Activated B cell treated with CpG ODN at 0.5 μM for 24 hours (primary cell): ENCODE measurements at regions of chr10 and their contacts with region 1.

Region 1: DNA sequence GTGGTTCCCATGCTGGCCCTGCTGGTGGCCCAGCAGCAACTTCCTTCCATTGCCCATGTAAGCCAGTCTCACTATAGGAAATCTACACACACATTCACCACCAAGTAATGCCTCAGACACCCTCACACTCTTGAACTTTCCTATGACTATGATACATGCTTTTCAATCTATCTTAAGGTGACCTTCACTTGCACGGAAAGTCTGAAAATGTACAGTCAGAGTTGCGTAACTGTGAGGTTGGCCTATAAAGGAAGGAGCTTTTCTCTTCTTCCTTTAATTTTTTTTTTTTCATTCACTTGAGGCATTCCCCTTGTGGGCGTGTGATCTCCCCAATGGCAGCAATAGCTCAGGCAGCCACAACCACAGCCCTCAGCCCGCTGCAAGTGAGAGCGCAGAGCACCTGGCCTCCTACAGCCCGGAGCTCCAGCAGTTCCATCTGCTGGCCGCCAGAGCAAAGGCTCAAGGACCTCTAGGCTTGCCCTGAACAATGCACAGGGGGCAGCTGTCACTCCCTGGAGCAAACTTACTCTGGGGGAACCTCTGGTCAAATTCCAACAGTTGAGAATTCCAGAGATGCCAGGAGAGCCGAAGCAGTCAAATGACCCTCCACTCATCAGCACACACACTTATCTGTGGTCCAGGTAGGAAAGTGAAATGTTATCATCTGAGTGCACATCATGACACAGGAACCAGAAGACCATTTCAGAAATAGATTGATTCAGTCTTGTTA is 123.1 kb upstream of the ADO start:
- DNase-seq: peak; percentile 58
- ATAC-seq: peak; percentile 96
- H3K4me3 Mint-ChIP-seq: peak overlapping the region; percentile 46
- H3K27ac Mint-ChIP-seq: peak overlapping the region; percentile 55
- H3K4me1 Mint-ChIP-seq: peaks cover 22% of the 10 kb centered on the region
- H3K27me3 Mint-ChIP-seq: no peaks in the 10 kb centered on the region
- CTCF ChIP-seq: no peak

Region 2: GRCh38 chr10:62492012-62492869 is 189.1 kb before region 1 on chr10:
- CTCF ChIA-PET with region 1: no interaction called
- POLR2A ChIA-PET with region 1: no interaction called
- intact Hi-C with region 1: loop called (anchors 1 kb)
- DNase-seq: no peak
- ATAC-seq: peak; percentile 49
- H3K4me3 Mint-ChIP-seq: no peak overlapping the region
- H3K27ac Mint-ChIP-seq: no peak overlapping the region
- H3K4me1 Mint-ChIP-seq: peaks cover 27% of the 10 kb centered on the region
- H3K27me3 Mint-ChIP-seq: peaks cover 4% of the 10 kb centered on the region
- CTCF ChIP-seq: no peak

Region 3: DNA sequence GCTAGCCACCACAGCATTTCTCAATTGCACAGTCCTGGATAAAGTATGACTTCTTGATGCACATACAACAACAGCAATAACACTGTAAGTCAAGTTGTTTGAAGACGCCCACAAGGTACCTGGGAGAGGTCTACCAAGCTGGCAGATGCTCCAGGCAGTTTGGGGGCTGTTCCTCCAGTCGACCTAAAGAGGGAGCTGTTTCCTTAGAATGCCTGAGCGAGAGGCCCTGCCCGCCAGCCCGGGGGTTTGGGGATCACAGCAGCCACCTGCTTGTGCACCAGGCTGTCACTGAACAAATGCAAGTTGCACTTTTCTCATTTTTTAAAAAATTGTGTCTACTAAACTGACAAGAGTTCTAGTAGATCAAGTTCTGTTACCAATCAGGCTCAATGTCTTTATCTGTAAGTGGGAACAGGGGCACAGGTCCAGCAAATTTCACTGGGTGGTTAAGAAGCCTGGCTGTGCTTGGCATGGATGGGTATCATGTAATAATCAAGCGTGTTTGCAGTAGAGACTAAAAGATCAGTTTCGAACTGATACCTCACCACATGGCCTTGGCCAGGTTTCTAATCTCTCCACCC is 70.6 kb before region 1 on chr10:
- CTCF ChIA-PET with region 1: interaction called, 23 read pairs
- POLR2A ChIA-PET with region 1: interaction called, 5 read pairs
- intact Hi-C with region 1: loop called (anchors 1 kb)
- DNase-seq: peak; percentile 37
- ATAC-seq: peak; percentile 95
- H3K4me3 Mint-ChIP-seq: no peak overlapping the region
- H3K27ac Mint-ChIP-seq: peak overlapping the region; percentile 30
- H3K4me1 Mint-ChIP-seq: peaks cover 15% of the 10 kb centered on the region
- H3K27me3 Mint-ChIP-seq: no peaks in the 10 kb centered on the region
- CTCF ChIP-seq: peak; percentile 38

Region 4: DNA sequence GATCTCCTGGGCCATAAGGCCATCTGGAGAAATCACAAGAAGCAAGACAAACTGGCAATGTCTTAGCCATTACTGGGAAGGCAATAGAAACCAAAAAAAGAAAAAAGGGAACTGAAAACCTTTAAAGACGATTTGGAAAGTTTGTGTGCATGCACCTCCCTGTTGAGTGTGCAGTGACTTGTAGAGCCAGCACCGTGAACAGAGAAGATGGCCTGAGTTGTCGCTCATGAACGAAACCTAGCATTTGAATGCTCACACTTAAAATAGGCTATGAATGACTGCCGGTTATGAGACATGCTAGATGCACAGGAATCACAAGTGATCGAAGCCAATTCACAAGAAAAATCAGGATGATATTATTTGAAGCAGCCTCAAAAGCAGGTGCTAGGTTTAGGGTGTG is 28.1 kb before region 1 on chr10:
- CTCF ChIA-PET with region 1: interaction called, 3 read pairs
- POLR2A ChIA-PET with region 1: interaction called, 7 read pairs
- intact Hi-C with region 1: loop called (anchors 1 kb)
- DNase-seq: no peak
- ATAC-seq: peak; percentile 92
- H3K4me3 Mint-ChIP-seq: peak overlapping the region; percentile 55
- H3K27ac Mint-ChIP-seq: peak overlapping the region; percentile 87
- H3K4me1 Mint-ChIP-seq: peaks cover 66% of the 10 kb centered on the region
- H3K27me3 Mint-ChIP-seq: peaks cover 1% of the 10 kb centered on the region
- CTCF ChIP-seq: no peak

Region 5: DNA sequence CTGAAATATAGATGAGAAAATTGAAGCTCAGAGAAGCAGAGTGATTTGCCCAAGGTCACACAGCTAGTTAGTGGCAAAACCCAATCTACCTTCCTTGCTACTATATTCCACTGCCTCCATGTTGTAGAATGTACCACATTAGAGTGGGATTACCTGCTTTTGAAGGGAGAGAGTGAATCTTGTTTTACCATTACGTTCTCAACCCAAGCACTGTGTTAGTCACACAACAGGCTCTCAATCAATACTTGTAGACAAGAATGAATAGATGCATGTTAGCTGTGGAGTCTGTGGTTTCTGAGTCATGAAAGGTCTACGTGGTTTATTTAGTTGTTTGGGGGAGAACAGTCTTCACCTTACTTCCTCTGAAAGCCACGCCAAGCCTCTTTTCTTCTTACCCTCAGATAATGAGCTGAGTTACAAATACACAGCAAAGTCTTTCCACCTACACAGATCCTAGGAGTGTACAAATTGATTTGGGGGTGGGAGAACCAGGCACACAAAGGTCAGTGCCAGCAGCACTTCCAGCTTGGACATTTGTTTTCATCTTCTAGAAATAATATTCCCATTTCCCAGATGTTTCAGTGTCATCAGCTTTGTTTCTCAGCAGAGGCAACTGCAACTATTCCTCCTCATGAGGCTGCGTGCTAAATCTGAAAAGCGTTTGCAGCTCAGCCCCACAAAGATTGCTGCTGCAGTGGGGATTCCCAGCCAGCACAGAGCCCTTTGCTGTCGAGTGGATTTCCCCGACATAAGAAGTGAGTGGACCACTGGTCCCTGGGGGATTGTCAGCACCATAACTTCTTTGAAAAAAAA is 51.7 kb after region 1 on chr10:
- CTCF ChIA-PET with region 1: interaction called, 14 read pairs
- POLR2A ChIA-PET with region 1: interaction called, 26 read pairs
- intact Hi-C with region 1: loop called (anchors 1 kb)
- DNase-seq: peak; percentile 46
- ATAC-seq: peak; percentile 77
- H3K4me3 Mint-ChIP-seq: peak overlapping the region; percentile 62
- H3K27ac Mint-ChIP-seq: no peak overlapping the region
- H3K4me1 Mint-ChIP-seq: peaks cover 2% of the 10 kb centered on the region
- H3K27me3 Mint-ChIP-seq: no peaks in the 10 kb centered on the region
- CTCF ChIP-seq: no peak

Region 6: GRCh38 chr10:62804356-62805230 is 123.2 kb after region 1 on chr10 and contains the start of gene ADO:
- CTCF ChIA-PET with region 1: interaction called, 3 read pairs
- POLR2A ChIA-PET with region 1: interaction called, 3 read pairs
- intact Hi-C with region 1: loop called (anchors 1 kb)
- DNase-seq: peak; percentile 77
- ATAC-seq: peak; percentile 87
- H3K4me3 Mint-ChIP-seq: peak within 1 kb of the TSS; percentile 95
- H3K27ac Mint-ChIP-seq: peak within 1 kb of the TSS; percentile 99
- H3K4me1 Mint-ChIP-seq: peaks cover 41% of the 10 kb centered on the region
- H3K27me3 Mint-ChIP-seq: no peaks in the 10 kb centered on the region
- CTCF ChIP-seq: no peak
- total RNA-seq, gene ADO: 21.6 and 21.7 TPM in 2 replicates

Region 7: DNA sequence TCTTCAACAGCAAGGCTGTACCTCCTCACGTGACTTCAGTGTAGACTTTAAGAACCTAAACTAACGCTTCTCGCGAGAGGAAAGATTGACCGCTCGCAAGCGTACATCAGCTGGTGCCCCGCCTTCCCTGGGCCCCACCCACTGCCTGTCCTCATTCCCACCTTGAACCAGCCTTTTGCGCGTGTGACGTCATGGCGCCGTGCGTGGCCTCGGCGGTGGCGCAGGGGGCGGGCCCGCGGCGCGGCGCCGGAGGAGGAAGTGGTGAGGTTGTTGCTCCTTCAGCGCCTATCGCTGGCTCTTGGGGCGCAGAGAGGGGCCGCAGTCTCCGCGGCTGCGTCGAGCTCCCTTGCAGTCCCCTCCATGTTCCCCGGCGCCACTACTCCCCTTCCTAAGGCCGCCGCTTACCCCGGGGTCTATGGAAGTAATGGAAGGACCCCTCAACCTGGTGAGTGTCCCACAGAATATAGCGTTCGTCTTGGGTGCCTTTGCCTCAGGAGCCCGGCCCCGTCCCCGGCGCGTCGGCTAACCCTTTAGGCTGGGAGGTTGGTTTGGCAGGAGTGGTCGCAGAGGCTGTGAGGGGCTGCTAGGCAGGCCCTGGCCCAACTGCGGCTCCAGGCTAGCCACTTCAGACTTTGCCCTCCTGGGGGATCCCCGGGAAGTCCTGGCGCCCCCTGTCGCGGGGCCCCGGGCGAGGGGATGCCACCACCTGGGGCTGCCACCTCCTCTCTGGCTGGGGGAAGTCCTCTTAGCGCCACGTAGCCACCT is 451.9 kb after region 1 on chr10 and contains the start of gene NRBF2:
- CTCF ChIA-PET with region 1: no interaction called
- POLR2A ChIA-PET with region 1: interaction called, 3 read pairs
- intact Hi-C with region 1: loop called (anchors 10 kb)
- DNase-seq: peak; percentile 97
- ATAC-seq: peak; percentile 88
- H3K4me3 Mint-ChIP-seq: peak within 1 kb of the TSS; percentile 93
- H3K27ac Mint-ChIP-seq: peak within 1 kb of the TSS; percentile 92
- H3K4me1 Mint-ChIP-seq: peaks cover 44% of the 10 kb centered on the region
- H3K27me3 Mint-ChIP-seq: no peaks in the 10 kb centered on the region
- CTCF ChIP-seq: no peak
- total RNA-seq, gene NRBF2: 23.8 and 26.9 TPM in 2 replicates